AG04449 (cell line): ENCODE measurements at regions of chr12 and their contacts with region 1.

Region 1: GRCh38 chr12:3135522-3136461 is 58.6 kb downstream of the TSPAN9 start:
- DNase-seq: no peak
- H3K4me3 ChIP-seq: no peak overlapping the region
- CTCF ChIP-seq: peak; percentile 75

Region 2: DNA sequence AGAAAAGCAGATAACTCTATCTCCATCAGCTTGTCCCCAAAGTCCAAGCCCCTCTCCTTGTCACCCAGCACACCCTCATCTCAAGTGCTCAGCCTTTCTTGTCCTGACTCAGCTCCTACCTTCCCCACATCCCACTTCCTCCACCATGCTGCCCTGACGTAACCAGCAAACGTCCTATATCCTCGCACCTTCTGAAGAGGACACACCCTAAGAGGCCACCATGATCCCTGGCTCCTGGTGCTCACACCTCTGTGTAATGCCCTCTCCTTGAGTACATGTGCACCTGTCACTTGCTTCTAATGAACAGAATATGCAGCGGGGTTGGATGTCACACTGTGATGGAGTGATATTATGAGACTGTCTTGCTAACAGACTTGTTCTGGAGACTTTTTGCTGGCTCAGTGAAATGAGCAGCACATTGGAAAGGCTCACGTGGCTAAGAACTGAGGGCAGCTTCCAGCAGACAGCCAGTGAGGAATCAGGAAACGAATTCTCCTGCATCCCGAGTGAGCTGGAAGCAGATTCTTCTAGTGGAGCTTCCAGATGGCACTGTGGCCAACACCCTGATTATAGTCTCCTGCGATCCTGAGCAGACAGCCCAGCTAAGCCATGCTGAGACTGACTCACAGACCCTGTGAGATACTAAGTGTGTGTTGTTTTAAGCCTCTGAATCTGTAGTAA is 74.9 kb before region 1 on chr12:
- CTCF ChIA-PET with region 1: no interaction called
- POLR2A ChIA-PET with region 1: no interaction called
- DNase-seq: peak; percentile 37
- H3K4me3 ChIP-seq: no peak overlapping the region; the same call in 1 of the 2 replicates
- CTCF ChIP-seq: no peak

Region 3: DNA sequence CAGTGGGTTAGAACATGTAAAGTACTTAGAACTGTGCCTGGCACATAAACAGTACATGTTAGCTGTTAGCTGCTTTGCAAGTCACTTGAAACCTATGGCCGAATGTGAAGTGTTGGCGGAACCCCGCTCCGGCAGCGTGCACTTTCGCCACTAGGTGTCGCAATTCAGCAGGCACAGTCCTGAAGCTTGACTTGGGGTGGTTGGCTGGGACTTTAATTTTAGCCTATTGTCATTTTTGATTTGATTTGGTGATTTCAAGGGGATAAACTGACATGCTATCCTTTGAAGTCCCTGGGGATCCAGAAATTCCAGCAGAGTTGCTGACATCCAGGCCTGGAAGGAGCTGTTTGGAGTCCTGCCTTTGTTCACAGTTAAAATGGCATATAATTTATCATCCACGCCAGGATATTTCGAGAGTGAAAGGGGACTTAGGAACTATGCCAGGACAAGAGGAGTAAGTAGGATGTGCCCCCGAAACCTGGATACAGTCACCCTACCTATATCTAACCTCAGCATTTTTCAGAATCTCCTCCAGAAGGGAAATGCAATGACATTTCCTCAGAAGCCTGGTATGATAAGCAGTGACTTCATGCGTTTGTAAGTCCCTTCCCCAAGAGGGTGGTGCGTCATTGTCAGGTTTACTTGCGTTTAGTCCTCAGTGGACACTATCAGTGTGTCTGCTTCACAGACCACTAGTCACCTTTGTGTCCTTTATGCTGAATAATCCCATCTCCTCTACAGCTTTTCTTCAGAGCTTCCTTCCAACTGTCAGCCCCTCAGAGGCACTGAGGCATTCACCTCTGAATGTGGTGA is 62.1 kb before region 1 on chr12:
- CTCF ChIA-PET with region 1: interaction called, 10 read pairs
- POLR2A ChIA-PET with region 1: no interaction called
- DNase-seq: peak; percentile 42
- H3K4me3 ChIP-seq: no peak overlapping the region
- CTCF ChIP-seq: peak; percentile 91

Region 4: GRCh38 chr12:3150931-3151835 is 15.4 kb after region 1 on chr12:
- CTCF ChIA-PET with region 1: interaction called, 100 read pairs
- POLR2A ChIA-PET with region 1: interaction called, 4 read pairs
- DNase-seq: no peak
- H3K4me3 ChIP-seq: no peak overlapping the region
- CTCF ChIP-seq: no peak

Region 5: DNA sequence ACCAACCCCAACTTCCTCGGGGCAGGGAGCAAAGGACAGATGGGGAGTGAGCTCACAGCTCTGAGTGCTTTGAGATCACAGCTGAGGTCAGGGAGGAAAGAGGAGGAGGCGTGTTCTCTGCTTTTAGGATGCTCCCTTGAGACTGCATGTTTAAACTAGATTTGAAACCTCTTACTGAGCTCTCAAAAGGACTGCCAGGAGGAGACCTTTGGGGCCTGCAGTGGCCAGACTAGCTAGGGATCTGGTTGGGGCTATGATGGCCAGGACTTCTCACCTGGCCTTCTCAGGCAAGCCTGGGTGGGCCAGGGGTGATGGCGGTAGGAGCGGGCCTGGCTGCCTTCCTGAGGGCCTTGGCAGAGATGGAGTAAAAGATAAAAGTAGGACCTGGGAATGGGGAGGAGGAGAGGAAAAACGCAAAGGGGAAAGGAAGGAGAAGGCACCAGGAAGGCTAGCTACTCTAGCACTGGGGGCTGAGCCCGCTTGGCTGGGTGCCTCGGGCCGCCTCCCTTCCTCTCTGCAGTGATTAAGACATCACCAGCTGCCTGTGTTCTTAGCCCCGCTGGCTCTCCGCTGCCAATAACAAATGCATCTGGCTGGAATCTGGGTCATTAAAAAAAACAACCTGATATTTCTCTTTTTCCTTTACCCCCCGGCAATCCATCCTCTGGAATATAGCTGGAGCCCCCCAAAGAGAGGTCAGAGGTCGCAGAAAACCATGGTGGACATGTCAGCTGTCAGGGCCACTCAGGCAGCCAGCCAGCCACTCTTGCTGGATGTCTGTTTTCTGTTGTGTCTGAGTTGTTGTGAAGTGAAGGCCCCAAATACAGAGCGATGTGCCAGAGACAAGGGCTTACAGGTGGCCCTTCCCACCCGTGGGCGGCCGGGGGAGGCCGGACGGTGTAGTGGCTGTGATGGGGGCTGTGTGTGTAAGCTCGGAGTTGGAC is 82.7 kb after region 1 on chr12:
- CTCF ChIA-PET with region 1: interaction called, 11 read pairs
- POLR2A ChIA-PET with region 1: no interaction called
- DNase-seq: no peak
- H3K4me3 ChIP-seq: no peak overlapping the region
- CTCF ChIP-seq: no peak

Region 6: DNA sequence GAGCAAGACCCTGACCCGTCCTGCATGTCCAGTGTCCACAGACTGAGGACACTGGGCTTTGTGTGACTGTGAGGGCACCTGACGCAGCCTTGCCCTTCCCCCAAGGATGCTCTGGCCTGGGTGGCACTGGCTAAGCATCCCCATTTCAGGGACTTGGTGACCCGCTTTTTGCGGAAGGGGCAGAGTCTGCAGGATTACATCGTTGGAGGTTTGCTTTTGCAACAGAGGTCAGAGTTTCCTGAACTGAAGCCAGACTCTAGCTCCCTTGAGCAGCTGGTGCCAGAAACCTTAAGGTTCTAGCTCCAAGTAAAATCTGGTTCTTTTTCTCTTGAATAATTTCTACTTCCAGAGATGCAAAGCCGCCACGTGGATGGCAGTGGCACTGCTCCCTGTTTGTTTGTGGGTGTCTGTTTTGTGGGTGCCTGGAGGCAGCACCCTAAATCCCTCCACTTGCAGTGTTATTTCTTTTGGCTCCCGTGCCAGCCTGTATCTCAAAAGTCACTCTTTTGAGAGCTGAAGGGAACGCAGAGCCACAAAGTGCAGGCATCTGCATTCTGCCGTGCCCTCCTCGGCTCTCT is 126.1 kb after region 1 on chr12:
- CTCF ChIA-PET with region 1: interaction called, 18 read pairs
- POLR2A ChIA-PET with region 1: no interaction called
- DNase-seq: no peak
- H3K4me3 ChIP-seq: no peak overlapping the region
- CTCF ChIP-seq: no peak